Naive thymus-derived CD4-positive, alpha-beta T cell (primary cell): ENCODE measurements at regions of chrX and their contacts with region 1.

Region 1: GRCh38 chrX:318739-319578 is at the start of gene GTPBP6:
- DNase-seq: peak; percentile 93 to 100 (median 99)
- ATAC-seq: peak; percentile 80
- H3K4me3 ChIP-seq: peak within 1 kb of the TSS; percentile 70
- H3K4me3 Mint-ChIP-seq: peak within 1 kb of the TSS in 9 of 10 donors; percentile 85 to 98 (median 92)
- H3K27ac ChIP-seq: peak within 1 kb of the TSS; percentile 95
- H3K27ac Mint-ChIP-seq: peak within 1 kb of the TSS; percentile 93 to 100 (median 98)
- H3K4me1 ChIP-seq: peaks cover 15 to 16% of the 10 kb centered on the region in 2 donors
- H3K4me1 Mint-ChIP-seq: peaks cover 8 to 34% (median 25%) of the 10 kb centered on the region in 7 donors
- H3K27me3 ChIP-seq: no peaks in the 10 kb centered on the region
- H3K27me3 Mint-ChIP-seq: peaks cover 0 to 3% (median 0%) of the 10 kb centered on the region in 5 donors
- total RNA-seq, gene GTPBP6: 52.1 to 95.2 (median 75.1) TPM

Region 2: GRCh38 chrX:19912-20571 is 298.9 kb before region 1 on chrX:
- CTCF ChIA-PET with region 1: no interaction called
- POLR2A ChIA-PET with region 1: no interaction called
- intact Hi-C with region 1: no loop called
- DNase-seq: peak in 5 of 9 donors; percentile 7 to 37 (median 28)
- ATAC-seq: peak; percentile 36
- H3K4me3 ChIP-seq: no peak overlapping the region
- H3K4me3 Mint-ChIP-seq: peak overlapping the region in 8 of 10 donors; percentile 82 to 97 (median 92)
- H3K27ac ChIP-seq: no peak overlapping the region
- H3K27ac Mint-ChIP-seq: peak overlapping the region in 5 of 9 donors; percentile 85 to 91 (median 88)
- H3K4me1 ChIP-seq: no peaks in the 10 kb centered on the region
- H3K4me1 Mint-ChIP-seq: peaks cover 0 to 7% (median 0%) of the 10 kb centered on the region in 7 donors
- H3K27me3 ChIP-seq: no peaks in the 10 kb centered on the region
- H3K27me3 Mint-ChIP-seq: peaks cover 0 to 3% (median 0%) of the 10 kb centered on the region in 5 donors

Region 3: GRCh38 chrX:283115-283845 is 35.7 kb before region 1 on chrX:
- CTCF ChIA-PET with region 1: no interaction called
- POLR2A ChIA-PET with region 1: no interaction called
- intact Hi-C with region 1: loop called (anchors 1 kb)
- DNase-seq: peak; percentile 62 to 92 (median 86)
- ATAC-seq: peak; percentile 100
- H3K4me3 ChIP-seq: peak overlapping the region; percentile 61
- H3K4me3 Mint-ChIP-seq: peak overlapping the region; percentile 75 to 99 (median 94)
- H3K27ac ChIP-seq: peak overlapping the region; percentile 65
- H3K27ac Mint-ChIP-seq: peak overlapping the region; percentile 74 to 98 (median 87)
- H3K4me1 ChIP-seq: peaks cover 3 to 9% of the 10 kb centered on the region in 2 donors
- H3K4me1 Mint-ChIP-seq: peaks cover 19 to 45% (median 36%) of the 10 kb centered on the region in 7 donors
- H3K27me3 ChIP-seq: no peaks in the 10 kb centered on the region
- H3K27me3 Mint-ChIP-seq: peaks cover 0 to under 1% (median 0%) of the 10 kb centered on the region in 5 donors

Region 4: DNA sequence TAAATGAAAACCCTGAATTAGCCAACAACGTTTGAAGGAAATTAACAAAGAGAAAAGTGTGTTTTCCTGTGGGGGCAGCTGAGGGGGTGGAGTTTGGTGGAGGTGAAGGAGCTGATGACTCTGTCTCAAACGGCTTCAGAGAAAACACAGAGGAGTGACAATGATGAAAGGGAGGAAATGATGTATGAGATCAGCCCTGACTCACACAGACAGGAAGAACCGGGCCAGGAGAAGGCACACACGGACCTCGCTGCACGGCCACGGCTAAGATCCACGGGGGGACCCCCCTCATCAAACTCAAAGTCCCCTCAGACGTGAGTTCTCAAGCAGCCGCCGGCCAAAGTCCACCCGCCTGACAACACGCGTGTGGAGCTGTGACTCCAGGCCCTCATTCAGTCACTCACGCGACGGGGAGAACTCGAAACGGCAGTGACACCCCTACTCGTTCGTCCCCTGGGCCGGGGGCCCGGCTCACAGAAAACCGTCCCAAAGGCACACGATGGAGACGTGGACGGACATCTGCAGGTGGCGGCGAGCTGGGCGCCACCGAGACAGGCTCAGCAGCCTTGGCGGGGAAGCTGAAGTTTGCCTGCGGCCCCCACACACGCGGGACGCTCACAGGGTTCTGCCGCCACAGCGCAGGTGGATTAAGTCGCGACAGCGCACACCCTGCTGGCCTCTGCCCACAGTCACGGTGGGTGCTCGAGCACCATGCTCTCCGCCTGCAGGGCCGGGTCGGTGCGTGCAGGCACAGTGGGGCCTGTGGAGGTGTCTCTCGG is 38.9 kb after region 1 on chrX:
- CTCF ChIA-PET with region 1: no interaction called
- POLR2A ChIA-PET with region 1: no interaction called
- intact Hi-C with region 1: loop called (anchors 1 to 2 kb)
- DNase-seq: peak in 7 of 9 donors; percentile 60 to 82 (median 76)
- ATAC-seq: peak; percentile 92
- H3K4me3 ChIP-seq: no peak overlapping the region
- H3K4me3 Mint-ChIP-seq: peak overlapping the region; percentile 35 to 81 (median 72)
- H3K27ac ChIP-seq: peak overlapping the region; percentile 71
- H3K27ac Mint-ChIP-seq: peak overlapping the region; percentile 86 to 99 (median 96)
- H3K4me1 ChIP-seq: peaks cover 0 to 19% of the 10 kb centered on the region in 2 donors
- H3K4me1 Mint-ChIP-seq: peaks cover 16 to 32% (median 30%) of the 10 kb centered on the region in 7 donors
- H3K27me3 ChIP-seq: no peaks in the 10 kb centered on the region
- H3K27me3 Mint-ChIP-seq: no peaks in the 10 kb centered on the region

Region 5: GRCh38 chrX:1205680-1206611 is 887.0 kb after region 1 on chrX:
- CTCF ChIA-PET with region 1: no interaction called
- POLR2A ChIA-PET with region 1: no interaction called
- intact Hi-C with region 1: loop called in 1 of 2 experiments (anchors 5 kb)
- DNase-seq: peak; percentile 14 to 77 (median 69)
- ATAC-seq: peak; percentile 70
- H3K4me3 ChIP-seq: peak overlapping the region; percentile 56
- H3K4me3 Mint-ChIP-seq: peak overlapping the region; percentile 76 to 87 (median 83)
- H3K27ac ChIP-seq: no peak overlapping the region
- H3K27ac Mint-ChIP-seq: peak overlapping the region in 7 of 9 donors; percentile 22 to 68 (median 36)
- H3K4me1 ChIP-seq: peaks cover 6 to 11% of the 10 kb centered on the region in 2 donors
- H3K4me1 Mint-ChIP-seq: peaks cover 15 to 42% (median 32%) of the 10 kb centered on the region in 7 donors
- H3K27me3 ChIP-seq: no peaks in the 10 kb centered on the region
- H3K27me3 Mint-ChIP-seq: no peaks in the 10 kb centered on the region

Region 6: GRCh38 chrX:1591102-1591900 is 1272.3 kb after region 1 on chrX and contains the start of gene AKAP17A:
- CTCF ChIA-PET with region 1: no interaction called
- POLR2A ChIA-PET with region 1: no interaction called
- intact Hi-C with region 1: loop called in 1 of 2 experiments (anchors 5 kb)
- DNase-seq: peak; percentile 92 to 100 (median 99)
- ATAC-seq: peak; percentile 95
- H3K4me3 ChIP-seq: peak within 1 kb of the TSS; percentile 76
- H3K4me3 Mint-ChIP-seq: peak within 1 kb of the TSS; percentile 85 to 97 (median 91)
- H3K27ac ChIP-seq: peak within 1 kb of the TSS; percentile 91
- H3K27ac Mint-ChIP-seq: peak within 1 kb of the TSS; percentile 82 to 94 (median 91)
- H3K4me1 ChIP-seq: peaks cover 7 to 10% of the 10 kb centered on the region in 2 donors
- H3K4me1 Mint-ChIP-seq: peaks cover 5 to 50% (median 34%) of the 10 kb centered on the region in 7 donors
- H3K27me3 ChIP-seq: no peaks in the 10 kb centered on the region
- H3K27me3 Mint-ChIP-seq: no peaks in the 10 kb centered on the region
- total RNA-seq, gene AKAP17A: 75.7 to 165 (median 125) TPM